Mammary epithelial cell (primary cell): ENCODE measurements at regions of chr12 and their contacts with region 1.

Region 1: DNA sequence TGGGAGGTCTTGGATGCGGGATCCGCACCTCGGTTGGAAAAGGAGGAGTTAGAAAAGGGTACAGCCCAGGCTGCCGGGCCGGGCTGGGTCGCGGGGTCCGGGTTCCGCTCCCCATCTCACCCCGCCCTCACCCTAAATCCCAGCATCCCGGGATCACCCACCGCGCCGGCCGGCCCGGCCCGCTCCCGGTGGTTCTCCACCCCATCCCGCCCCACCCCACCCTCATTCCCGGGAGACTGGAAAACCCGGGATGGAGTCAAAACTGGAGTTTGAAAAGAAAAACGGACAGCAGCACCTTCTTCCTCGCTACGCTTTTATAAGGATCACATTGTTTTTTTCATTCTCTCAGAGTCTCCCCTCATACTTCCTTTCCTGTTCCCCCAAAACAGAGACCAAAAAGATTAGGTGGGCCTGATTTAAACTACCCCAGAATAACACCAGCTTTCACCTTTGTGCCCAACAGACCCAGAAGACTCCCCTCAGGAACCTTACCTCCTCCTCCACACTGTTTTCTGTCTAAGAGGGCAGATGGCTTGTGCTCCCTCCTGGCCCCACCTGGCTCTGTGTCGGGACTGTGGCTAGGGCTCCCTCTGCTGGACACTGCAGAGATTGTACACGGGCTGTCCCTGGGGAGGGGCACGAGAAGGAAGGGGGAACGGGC is 2.8 kb downstream of the GLI1 start:
- DNase-seq: peak; percentile 90
- H3K4me3 ChIP-seq: peak overlapping the region; percentile 46 to 53 (median 52)
- H3K27ac ChIP-seq: no peak overlapping the region
- H3K4me1 ChIP-seq: peaks cover 21% of the 10 kb centered on the region
- H3K27me3 ChIP-seq: no peaks in the 10 kb centered on the region
- CTCF ChIP-seq: peak; percentile 97 to 98

Region 2: DNA sequence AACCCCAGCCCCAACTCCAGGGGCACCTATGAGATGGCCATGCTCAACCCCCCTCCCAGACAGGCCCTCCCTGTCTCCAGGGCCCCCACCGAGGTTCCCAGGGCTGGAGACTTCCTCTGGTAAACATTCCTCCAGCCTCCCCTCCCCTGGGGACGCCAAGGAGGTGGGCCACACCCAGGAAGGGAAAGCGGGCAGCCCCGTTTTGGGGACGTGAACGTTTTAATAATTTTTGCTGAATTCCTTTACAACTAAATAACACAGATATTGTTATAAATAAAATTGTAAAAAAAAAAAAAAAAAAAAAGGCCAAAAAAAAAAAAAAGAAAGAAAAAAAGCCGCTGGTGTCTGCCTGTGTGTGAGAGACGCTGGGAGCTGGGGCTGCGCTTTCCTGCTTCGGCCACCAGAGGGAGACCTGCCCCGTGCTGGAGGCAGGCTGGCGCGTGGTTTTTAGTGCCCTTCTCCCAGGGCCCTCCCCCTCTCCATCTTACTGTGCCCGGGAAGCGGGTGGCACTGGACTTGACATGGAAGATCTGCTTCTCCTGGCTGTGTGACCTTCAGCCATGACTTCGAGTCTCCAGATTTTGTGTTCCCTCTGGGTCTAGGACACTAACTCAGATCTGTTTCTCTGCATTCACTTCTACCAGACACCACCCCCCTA is 249.2 kb before region 1 on chr12:
- CTCF ChIA-PET with region 1: no interaction called
- dilution Hi-C with region 1: no loop called
- in situ Hi-C with region 1: no loop called
- intact Hi-C with region 1: loop called (anchors 1 kb)
- DNase-seq: peak; percentile 68
- H3K4me3 ChIP-seq: no peak overlapping the region
- H3K27ac ChIP-seq: no peak overlapping the region
- H3K4me1 ChIP-seq: peaks cover 15% of the 10 kb centered on the region
- H3K27me3 ChIP-seq: peaks cover 6% of the 10 kb centered on the region
- CTCF ChIP-seq: peak; percentile 95 to 96

Region 3: DNA sequence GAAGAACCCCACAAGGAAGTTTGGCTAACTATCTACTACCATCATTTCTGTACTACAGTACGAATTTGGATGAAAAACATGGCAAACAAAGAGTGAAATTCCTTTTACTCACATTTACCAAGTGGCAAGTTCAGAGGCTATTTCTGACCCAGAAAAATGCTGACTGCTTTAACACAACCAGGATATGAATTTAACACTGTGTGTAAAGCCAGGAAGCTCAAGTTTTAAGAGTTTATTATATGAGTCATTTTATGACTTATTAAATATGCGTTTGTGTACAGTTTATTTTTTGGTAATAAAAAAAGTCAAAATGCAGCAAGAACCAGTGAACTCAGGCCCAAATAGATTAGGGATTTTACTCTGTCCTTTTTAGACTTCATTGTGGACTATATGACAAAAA is 153.0 kb before region 1 on chr12:
- CTCF ChIA-PET with region 1: no interaction called
- dilution Hi-C with region 1: no loop called
- in situ Hi-C with region 1: loop called (anchors 5 to 10 kb)
- intact Hi-C with region 1: no loop called
- DNase-seq: peak; percentile 13
- H3K4me3 ChIP-seq: no peak overlapping the region
- H3K27ac ChIP-seq: no peak overlapping the region
- H3K4me1 ChIP-seq: peaks cover 8% of the 10 kb centered on the region
- H3K27me3 ChIP-seq: no peaks in the 10 kb centered on the region
- CTCF ChIP-seq: no peak

Region 4: DNA sequence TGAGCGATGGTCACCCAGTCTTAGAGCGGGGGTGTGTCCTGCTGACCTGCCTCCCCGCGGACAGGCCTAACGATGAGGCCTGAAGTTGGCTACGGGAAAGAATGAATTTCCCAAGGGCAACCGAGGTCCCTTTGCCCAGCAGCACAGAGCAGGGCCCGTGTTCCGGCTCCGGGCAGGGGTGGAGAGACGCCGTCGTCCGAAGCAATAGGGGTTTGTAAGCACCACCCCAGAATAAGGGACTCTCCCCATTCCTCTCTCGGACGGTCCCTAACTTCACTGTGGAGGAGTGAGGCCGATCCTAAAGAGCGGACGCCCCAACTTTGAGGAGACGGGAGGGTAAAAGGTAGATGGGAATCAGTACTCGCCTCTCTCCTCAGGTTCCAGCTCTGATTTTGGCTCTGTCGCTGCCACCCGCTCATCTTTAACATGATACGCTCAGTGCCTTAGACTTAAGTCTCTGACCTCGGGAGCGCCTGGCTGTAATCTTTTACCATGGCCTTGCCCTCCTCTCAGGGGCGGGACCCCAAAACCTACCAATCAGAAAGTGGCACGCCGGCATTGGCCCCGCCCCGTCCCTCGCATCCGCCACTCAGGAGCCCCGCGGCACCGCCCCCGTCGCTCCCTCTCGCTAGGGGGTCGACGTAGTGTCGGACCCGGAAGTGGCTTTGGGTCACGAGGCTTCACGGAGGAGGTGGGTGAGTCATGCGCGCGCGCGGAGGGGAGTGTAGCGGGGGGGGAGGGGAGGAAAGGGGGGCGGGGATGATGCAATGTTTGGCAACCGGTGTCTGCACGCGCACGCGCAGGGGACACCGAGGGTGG is 57.9 kb after region 1 on chr12 and contains the start of gene DDIT3:
- CTCF ChIA-PET with region 1: no interaction called
- dilution Hi-C with region 1: no loop called
- in situ Hi-C with region 1: no loop called
- intact Hi-C with region 1: loop called (anchors 2 kb)
- DNase-seq: peak; percentile 97
- H3K4me3 ChIP-seq: peak within 1 kb of the TSS; percentile 57 to 83 (median 78)
- H3K27ac ChIP-seq: peak within 1 kb of the TSS; percentile 89
- H3K4me1 ChIP-seq: peaks cover 55% of the 10 kb centered on the region
- H3K27me3 ChIP-seq: no peaks in the 10 kb centered on the region
- CTCF ChIP-seq: no peak
- total RNA-seq, gene DDIT3: 28.3 to 66.1 TPM

Region 5: DNA sequence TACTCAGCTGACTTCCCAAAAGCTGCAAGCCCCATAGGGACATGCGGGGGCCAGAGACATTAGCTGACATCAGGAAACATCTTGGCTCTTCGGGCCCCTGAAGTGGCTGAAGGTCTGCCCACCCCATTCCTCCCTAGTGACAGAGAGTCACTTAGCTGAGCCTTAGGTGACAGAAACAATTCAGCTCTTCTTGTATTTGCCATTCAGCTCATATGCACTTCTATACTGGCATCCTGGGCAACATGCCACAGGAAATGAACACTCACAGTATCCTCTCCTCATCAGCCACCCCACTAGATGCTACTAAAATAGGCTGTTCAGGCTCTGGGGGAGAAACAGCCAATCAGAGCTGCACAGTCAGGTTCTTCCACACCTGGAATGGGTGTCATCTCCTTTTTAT is 81.2 kb after region 1 on chr12:
- CTCF ChIA-PET with region 1: no interaction called
- dilution Hi-C with region 1: no loop called
- in situ Hi-C with region 1: no loop called
- intact Hi-C with region 1: no loop called
- DNase-seq: no peak
- H3K4me3 ChIP-seq: no peak overlapping the region
- H3K27ac ChIP-seq: no peak overlapping the region
- H3K4me1 ChIP-seq: peaks cover 14% of the 10 kb centered on the region
- H3K27me3 ChIP-seq: no peaks in the 10 kb centered on the region
- CTCF ChIP-seq: no peak

Region 6: GRCh38 chr12:57735952-57736740 is 273.8 kb after region 1 on chr12:
- CTCF ChIA-PET with region 1: interaction called, 7 read pairs
- dilution Hi-C with region 1: no loop called
- in situ Hi-C with region 1: no loop called
- intact Hi-C with region 1: loop called (anchors 5 kb)
- DNase-seq: peak; percentile 37
- H3K4me3 ChIP-seq: peak overlapping the region; percentile 9 to 27 (median 11)
- H3K27ac ChIP-seq: no peak overlapping the region
- H3K4me1 ChIP-seq: peaks cover 24% of the 10 kb centered on the region
- H3K27me3 ChIP-seq: peaks cover 22% of the 10 kb centered on the region
- CTCF ChIP-seq: peak; percentile 26 to 46